ENCODE measurements at regions of chr10 and their contacts with region 1.

Region 1: DNA sequence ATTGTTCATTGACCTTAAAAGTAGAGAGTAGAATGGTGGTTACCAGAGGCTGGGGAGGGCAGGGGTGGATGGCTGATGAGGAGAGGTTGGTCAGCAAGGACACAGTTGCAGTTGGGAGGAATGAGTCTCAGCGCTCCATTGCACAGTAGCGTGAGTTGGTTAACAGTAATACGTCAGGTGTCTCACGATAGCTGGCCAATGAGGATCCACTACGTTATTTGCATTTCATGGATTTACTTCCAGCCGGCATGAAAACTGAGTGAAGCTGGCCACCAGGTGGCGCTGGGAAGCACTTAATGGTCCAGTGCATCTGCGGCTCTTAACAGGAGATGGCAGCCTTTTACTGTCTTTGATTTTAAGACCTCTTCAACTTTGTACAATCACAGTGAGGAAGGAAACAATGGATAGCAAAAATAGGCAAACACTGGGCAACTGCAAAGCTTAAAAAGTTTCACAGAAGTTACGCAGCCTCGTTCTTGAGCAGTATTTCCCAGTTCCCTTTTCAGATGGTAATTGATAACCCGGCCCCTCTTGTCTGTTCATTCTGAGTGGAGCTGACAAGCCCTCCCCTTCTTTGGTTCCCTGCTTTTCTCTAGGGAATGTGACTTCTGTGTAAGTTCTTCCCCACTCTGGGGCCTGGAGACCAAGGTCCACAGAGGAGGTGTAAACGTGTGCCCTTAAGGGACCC is 23.7 kb downstream of the AKR1E2 start:
- DNase-seq: peak; percentile 91
- H3K4me3 ChIP-seq: no peak overlapping the region
- H3K27ac ChIP-seq: no peak overlapping the region
- H3K4me1 ChIP-seq: peaks cover 9% of the 10 kb centered on the region
- H3K27me3 ChIP-seq: no peaks in the 10 kb centered on the region
- CTCF ChIP-seq: peak; percentile 100

Region 2: DNA sequence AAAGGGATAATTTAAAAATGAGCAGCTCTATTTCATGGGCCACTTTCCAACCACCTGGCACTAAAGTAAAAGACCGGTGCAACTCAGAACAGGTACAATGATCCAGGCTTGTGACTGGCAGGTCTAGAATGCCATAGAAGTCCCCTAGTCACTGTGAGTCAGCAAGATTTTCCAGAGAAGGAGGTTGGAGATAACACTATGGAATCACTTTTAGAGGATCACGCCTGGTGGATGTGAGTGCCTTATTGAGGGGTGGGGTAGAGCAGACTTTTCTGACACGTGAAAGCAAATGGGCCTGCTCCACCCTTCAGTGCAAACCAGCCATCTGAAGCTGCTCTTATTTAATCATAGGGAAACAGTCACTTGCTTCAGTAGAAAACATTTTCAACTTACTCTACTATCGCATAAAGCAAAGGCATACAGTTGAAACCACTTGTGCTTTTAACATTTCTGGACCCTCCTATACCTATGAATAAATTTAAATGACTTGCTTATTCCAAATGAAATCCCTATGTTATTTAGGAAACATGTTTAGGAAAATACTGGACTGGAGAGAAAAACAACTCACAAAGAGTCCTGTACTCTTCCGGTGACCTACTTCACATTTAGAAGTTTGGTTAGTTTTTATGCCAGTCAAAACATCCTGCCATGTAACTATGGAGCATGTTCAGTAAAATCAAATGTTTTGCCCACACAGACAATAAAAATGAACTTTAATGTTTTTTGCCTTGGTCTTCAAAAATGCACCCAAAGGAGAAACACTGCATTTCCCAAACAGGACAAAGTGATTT is 92.0 kb after region 1 on chr10:
- CTCF ChIA-PET with region 1: no interaction called
- dilution Hi-C with region 1: no loop called
- in situ Hi-C with region 1: no loop called
- intact Hi-C with region 1: loop called (anchors 5 kb)
- DNase-seq: peak; percentile 48
- H3K4me3 ChIP-seq: no peak overlapping the region
- H3K27ac ChIP-seq: peak overlapping the region; percentile 49
- H3K4me1 ChIP-seq: peaks cover 33% of the 10 kb centered on the region
- H3K27me3 ChIP-seq: no peaks in the 10 kb centered on the region
- CTCF ChIP-seq: no peak

Region 3: GRCh38 chr10:5094265-5095205 is 244.8 kb after region 1 on chr10 and contains the start of gene AKR1C3:
- CTCF ChIA-PET with region 1: no interaction called
- dilution Hi-C with region 1: no loop called
- in situ Hi-C with region 1: loop called (anchors 5 to 10 kb)
- intact Hi-C with region 1: loop called (anchors 1 kb)
- DNase-seq: peak; percentile 80
- H3K4me3 ChIP-seq: peak within 1 kb of the TSS; percentile 57 to 67 (median 60)
- H3K27ac ChIP-seq: peak within 1 kb of the TSS; percentile 80
- H3K4me1 ChIP-seq: peaks cover 18% of the 10 kb centered on the region
- H3K27me3 ChIP-seq: no peaks in the 10 kb centered on the region
- CTCF ChIP-seq: peak; percentile 66 to 75
- total RNA-seq, gene AKR1C3: 18.8 to 50.7 TPM

Region 4: GRCh38 chr10:5385224-5385623 is 535.5 kb after region 1 on chr10:
- CTCF ChIA-PET with region 1: no interaction called
- dilution Hi-C with region 1: no loop called
- in situ Hi-C with region 1: loop called (anchors 10 to 25 kb)
- intact Hi-C with region 1: loop called (anchors 1 kb)
- DNase-seq: no peak
- H3K4me3 ChIP-seq: no peak overlapping the region
- H3K27ac ChIP-seq: no peak overlapping the region
- H3K4me1 ChIP-seq: no peaks in the 10 kb centered on the region
- H3K27me3 ChIP-seq: no peaks in the 10 kb centered on the region
- CTCF ChIP-seq: no peak

Region 5: DNA sequence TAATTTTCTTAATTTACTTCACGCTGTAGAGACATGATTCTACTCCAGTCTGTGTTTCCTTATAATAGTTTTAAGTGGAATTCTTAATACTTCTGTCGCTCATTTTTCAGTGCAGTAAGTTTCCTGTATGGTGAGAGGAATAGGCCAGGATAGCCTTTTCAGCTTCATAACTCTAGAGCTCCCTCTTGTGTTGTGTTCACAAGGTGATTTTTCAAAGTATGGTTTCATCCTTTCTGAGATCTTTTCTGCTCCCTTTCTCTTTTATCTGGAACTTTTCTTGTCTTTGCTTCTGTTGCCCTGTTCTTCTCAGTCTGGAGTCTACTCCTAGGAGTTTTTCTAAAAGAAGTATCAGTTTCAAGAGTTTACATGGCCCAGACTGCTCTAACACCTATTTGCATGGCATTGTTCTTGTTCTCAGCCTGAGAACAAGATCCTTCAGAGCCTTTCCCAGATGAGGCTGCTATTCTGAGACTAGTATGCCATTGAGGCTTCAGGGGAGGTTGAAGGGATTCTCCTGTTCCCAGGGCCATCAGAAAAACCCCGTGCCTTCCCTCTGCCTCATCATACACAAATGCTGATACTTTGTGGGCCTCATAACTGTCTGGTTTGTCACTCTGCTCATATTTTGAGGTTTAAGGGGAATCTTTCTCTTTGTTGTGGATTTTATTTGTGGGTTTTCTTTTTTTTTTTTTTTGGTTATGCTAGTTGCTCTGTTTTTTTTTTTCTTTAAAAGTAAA is 584.5 kb after region 1 on chr10:
- CTCF ChIA-PET with region 1: interaction called, 7 read pairs
- dilution Hi-C with region 1: no loop called
- in situ Hi-C with region 1: loop called in 1 of 2 experiments (anchors 10 kb)
- intact Hi-C with region 1: loop called (anchors 1 kb)
- DNase-seq: peak; percentile 72
- H3K4me3 ChIP-seq: no peak overlapping the region
- H3K27ac ChIP-seq: peak overlapping the region; percentile 87
- H3K4me1 ChIP-seq: peaks cover 14% of the 10 kb centered on the region
- H3K27me3 ChIP-seq: no peaks in the 10 kb centered on the region
- CTCF ChIP-seq: peak; percentile 53 to 76